Naive thymus-derived CD4-positive, alpha-beta T cell (primary cell): ENCODE measurements at regions of chr1 and their contacts with region 1.

Region 1: DNA sequence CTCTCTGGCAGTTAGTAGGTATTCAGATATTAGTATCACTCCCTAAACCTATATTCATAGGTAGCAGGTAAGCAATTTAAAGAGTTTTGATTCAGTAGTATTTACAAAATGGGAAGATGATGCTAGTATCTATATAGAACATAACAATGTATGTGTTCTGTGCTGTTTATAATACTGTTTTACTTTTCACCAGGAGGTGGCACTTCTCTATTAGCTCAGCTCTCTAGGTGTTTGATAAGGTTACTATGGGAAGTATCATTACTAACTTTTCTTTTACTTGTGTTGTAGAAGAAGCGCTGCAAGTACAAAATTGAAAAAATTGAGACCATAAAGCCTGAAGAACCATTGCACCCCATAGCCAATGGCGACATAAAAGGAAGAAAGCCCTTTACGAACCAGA is 49.4 kb upstream of the FASLG start:
- DNase-seq: peak in 6 of 9 donors; percentile 21 to 53 (median 38)
- ATAC-seq: peak; percentile 75
- H3K4me3 ChIP-seq: no peak overlapping the region
- H3K4me3 Mint-ChIP-seq: no peak overlapping the region
- H3K27ac ChIP-seq: no peak overlapping the region
- H3K27ac Mint-ChIP-seq: peak overlapping the region in 3 of 9 donors; percentile 1 to 25 (median 7)
- H3K4me1 ChIP-seq: no peaks in the 10 kb centered on the region
- H3K4me1 Mint-ChIP-seq: peaks cover 0 to 15% (median 6%) of the 10 kb centered on the region in 7 donors
- H3K27me3 ChIP-seq: no peaks in the 10 kb centered on the region
- H3K27me3 Mint-ChIP-seq: no peaks in the 10 kb centered on the region

Region 2: GRCh38 chr1:172002725-172003345 is 606.7 kb before region 1 on chr1:
- CTCF ChIA-PET with region 1: no interaction called
- POLR2A ChIA-PET with region 1: no interaction called
- intact Hi-C with region 1: loop called in 1 of 2 experiments (anchors 10 kb)
- DNase-seq: peak in 7 of 9 donors; percentile 8 to 53 (median 37)
- ATAC-seq: peak; percentile 55
- H3K4me3 ChIP-seq: no peak overlapping the region
- H3K4me3 Mint-ChIP-seq: no peak overlapping the region
- H3K27ac ChIP-seq: no peak overlapping the region
- H3K27ac Mint-ChIP-seq: no peak overlapping the region
- H3K4me1 ChIP-seq: no peaks in the 10 kb centered on the region
- H3K4me1 Mint-ChIP-seq: peaks cover 0 to 8% (median 3%) of the 10 kb centered on the region in 7 donors
- H3K27me3 ChIP-seq: no peaks in the 10 kb centered on the region
- H3K27me3 Mint-ChIP-seq: no peaks in the 10 kb centered on the region

Region 3: GRCh38 chr1:172638885-172639831 is 29.6 kb after region 1 on chr1:
- CTCF ChIA-PET with region 1: interaction called, 3 read pairs
- POLR2A ChIA-PET with region 1: interaction called, 3 read pairs
- intact Hi-C with region 1: loop called (anchors 1 kb)
- DNase-seq: peak; percentile 12 to 85 (median 79)
- ATAC-seq: peak; percentile 87
- H3K4me3 ChIP-seq: peak overlapping the region; percentile 32
- H3K4me3 Mint-ChIP-seq: peak overlapping the region; percentile 46 to 88 (median 78)
- H3K27ac ChIP-seq: peak overlapping the region; percentile 43
- H3K27ac Mint-ChIP-seq: peak overlapping the region; percentile 88 to 94 (median 91)
- H3K4me1 ChIP-seq: peaks cover 63 to 72% of the 10 kb centered on the region in 2 donors
- H3K4me1 Mint-ChIP-seq: peaks cover 54 to 87% (median 81%) of the 10 kb centered on the region in 7 donors
- H3K27me3 ChIP-seq: no peaks in the 10 kb centered on the region
- H3K27me3 Mint-ChIP-seq: peaks cover 0 to 29% (median 0%) of the 10 kb centered on the region in 5 donors

Region 4: DNA sequence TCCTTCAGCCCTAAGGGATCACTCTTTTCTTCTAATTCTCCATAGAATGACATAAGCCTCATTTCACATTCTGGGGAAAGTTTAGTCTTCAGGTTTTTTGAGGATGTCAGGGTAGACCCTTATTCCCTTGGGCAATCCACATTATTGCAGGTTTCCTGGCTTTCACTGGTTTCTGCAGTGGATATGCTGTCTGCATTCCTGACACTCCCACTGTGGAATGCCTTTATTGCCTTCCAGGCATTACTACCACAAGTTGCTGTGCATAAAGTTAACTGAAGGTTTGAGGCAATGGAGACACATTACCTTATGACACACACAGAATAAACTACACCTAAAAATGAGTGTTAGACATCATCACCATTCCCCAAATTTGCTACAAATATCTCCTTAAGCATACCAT is 62.1 kb after region 1 on chr1:
- CTCF ChIA-PET with region 1: interaction called, 5 read pairs
- POLR2A ChIA-PET with region 1: no interaction called
- intact Hi-C with region 1: loop called in 1 of 2 experiments (anchors 5 kb)
- DNase-seq: no peak
- ATAC-seq: no peak
- H3K4me3 ChIP-seq: peak overlapping the region; percentile 34
- H3K4me3 Mint-ChIP-seq: peak overlapping the region in 2 of 10 donors; percentile 3 to 66
- H3K27ac ChIP-seq: no peak overlapping the region
- H3K27ac Mint-ChIP-seq: peak overlapping the region in 2 of 9 donors; percentile 20 to 34
- H3K4me1 ChIP-seq: peaks cover 50 to 60% of the 10 kb centered on the region in 2 donors
- H3K4me1 Mint-ChIP-seq: peaks cover 23 to 82% (median 60%) of the 10 kb centered on the region in 7 donors
- H3K27me3 ChIP-seq: no peaks in the 10 kb centered on the region
- H3K27me3 Mint-ChIP-seq: no peaks in the 10 kb centered on the region

Region 5: GRCh38 chr1:172727956-172728603 is 118.6 kb after region 1 on chr1:
- CTCF ChIA-PET with region 1: interaction called, 37 read pairs
- POLR2A ChIA-PET with region 1: no interaction called
- intact Hi-C with region 1: no loop called
- DNase-seq: peak in 6 of 9 donors; percentile 23 to 42 (median 38)
- ATAC-seq: peak; percentile 88
- H3K4me3 ChIP-seq: no peak overlapping the region
- H3K4me3 Mint-ChIP-seq: no peak overlapping the region
- H3K27ac ChIP-seq: no peak overlapping the region
- H3K27ac Mint-ChIP-seq: peak overlapping the region in 1 of 9 donors; percentile 1
- H3K4me1 ChIP-seq: peaks cover 0 to 6% of the 10 kb centered on the region in 2 donors
- H3K4me1 Mint-ChIP-seq: peaks cover 7 to 25% (median 15%) of the 10 kb centered on the region in 7 donors
- H3K27me3 ChIP-seq: no peaks in the 10 kb centered on the region
- H3K27me3 Mint-ChIP-seq: peaks cover 0 to 42% (median 0%) of the 10 kb centered on the region in 5 donors